HEK293 (cell line): ENCODE measurements at regions of chr1 and their contacts with region 1.

Region 1: GRCh38 chr1:162035241-162035640 is 11.6 kb upstream of the OLFML2B start:
- H3K4me3 ChIP-seq: no peak overlapping the region
- H3K27ac ChIP-seq: no peak overlapping the region
- H3K4me1 ChIP-seq: no peaks in the 10 kb centered on the region
- CTCF ChIP-seq: no peak

Region 2: DNA sequence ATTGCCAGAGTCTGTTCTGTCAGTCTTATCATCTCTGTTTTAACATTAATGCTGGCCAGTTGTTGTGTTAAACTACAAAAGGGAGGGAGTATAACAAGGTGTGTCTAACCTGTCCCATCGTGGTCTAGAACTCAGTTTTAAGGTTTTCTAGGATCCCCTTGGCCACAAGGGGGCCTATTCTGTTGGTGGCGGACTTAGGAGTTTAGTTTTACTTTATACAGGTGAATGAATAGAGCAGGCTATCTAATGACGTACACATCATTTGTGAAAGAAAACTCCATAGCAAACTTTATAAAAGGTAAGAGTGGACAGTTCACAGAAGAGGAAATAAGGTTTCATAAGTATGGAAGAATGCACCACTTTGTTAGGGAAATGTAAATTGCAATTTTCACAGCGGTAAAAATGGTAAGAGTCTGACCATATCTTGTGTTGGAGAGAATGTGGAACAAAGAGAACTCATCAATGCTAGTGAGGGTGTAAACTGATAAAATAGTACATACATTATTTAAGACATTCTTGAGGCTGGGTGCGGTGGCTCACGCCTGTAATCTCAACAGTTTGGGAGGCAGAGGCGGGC is 271.6 kb before region 1 on chr1:
- CTCF ChIA-PET with region 1: interaction called, 14 read pairs
- POLR2A ChIA-PET with region 1: no interaction called
- H3K4me3 ChIP-seq: no peak overlapping the region
- H3K27ac ChIP-seq: no peak overlapping the region
- H3K4me1 ChIP-seq: no peaks in the 10 kb centered on the region
- CTCF ChIP-seq: no peak

Region 3: DNA sequence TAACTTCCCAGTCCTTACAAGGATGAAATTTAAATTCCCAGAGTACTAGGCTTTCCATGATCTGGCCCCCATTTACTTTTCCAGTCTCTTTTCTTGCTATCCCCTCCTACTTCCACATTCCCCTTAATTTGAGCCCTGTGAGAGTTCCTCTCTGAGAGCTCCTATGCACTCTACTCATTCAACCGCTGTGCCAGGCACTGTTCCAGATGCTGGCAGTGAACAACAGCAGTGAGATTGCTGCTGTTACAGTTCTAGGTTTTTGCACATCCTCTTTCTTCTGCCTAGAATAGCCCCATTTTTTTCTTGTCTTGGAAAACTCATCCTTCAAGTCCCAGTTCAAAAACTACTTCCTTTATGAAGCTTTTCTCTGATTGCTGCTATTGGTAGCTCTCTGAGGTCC is 250.3 kb before region 1 on chr1:
- CTCF ChIA-PET with region 1: interaction called, 239 read pairs
- POLR2A ChIA-PET with region 1: no interaction called
- H3K4me3 ChIP-seq: no peak overlapping the region
- H3K27ac ChIP-seq: no peak overlapping the region
- H3K4me1 ChIP-seq: no peaks in the 10 kb centered on the region
- CTCF ChIP-seq: no peak

Region 4: GRCh38 chr1:161801955-161802354 is 233.3 kb before region 1 on chr1:
- CTCF ChIA-PET with region 1: interaction called, 239 read pairs
- POLR2A ChIA-PET with region 1: no interaction called
- H3K4me3 ChIP-seq: no peak overlapping the region
- H3K27ac ChIP-seq: no peak overlapping the region
- H3K4me1 ChIP-seq: no peaks in the 10 kb centered on the region
- CTCF ChIP-seq: no peak

Region 5: DNA sequence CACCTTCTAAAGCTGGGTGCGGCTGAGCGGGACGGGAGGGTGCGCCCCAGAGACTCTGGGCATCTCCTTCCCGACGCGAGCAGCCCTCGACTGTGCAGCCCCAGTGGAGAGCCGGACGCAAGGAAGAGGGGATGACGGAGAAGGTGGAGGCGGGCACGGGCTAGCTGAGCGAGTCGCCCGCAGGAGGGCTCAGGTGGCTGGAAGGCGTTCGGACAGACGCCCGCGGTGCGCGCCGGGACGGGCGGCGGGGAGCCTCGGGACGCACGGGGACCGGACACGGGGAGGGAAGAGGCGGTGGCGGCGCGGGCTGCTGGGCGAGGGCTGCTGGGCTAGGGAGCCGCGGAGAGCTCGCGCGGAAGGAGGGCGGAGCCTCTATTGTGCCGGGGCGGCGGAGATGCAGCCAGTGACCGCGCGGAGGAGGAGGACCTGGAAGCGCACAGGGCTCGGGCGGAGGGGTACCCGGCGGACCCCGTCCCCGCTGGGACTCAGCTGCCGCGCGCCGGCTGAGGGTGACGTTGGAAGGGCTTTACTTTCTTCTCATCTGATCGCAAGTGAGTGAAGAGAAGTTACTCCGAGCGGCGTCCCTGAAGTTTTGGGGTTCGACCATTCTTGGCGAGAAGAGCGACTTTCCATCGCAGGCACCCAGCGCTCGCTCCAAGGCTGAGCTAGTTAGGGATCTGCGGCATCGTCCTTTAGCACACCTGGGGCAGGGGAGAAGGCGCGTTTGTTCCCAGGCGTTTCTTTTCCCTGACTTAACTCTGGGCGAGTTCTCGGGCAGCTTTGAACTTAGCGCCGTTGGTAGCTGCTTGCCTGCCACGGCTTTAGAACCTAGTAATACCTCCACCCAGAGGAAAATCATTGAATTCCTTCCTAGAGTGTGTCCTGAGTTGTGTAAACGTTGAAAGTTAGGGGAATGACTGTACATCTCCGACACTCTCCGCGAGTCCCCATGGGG is 11.4 kb before region 1 on chr1 and contains the start of gene OLFML2B:
- CTCF ChIA-PET with region 1: interaction called, 30 read pairs
- POLR2A ChIA-PET with region 1: interaction called, 12 read pairs
- H3K4me3 ChIP-seq: peak within 1 kb of the TSS; percentile 43
- H3K27ac ChIP-seq: no peak within 1 kb of the TSS; the same call in 1 of the 2 replicates
- H3K4me1 ChIP-seq: peaks cover 12% of the 10 kb centered on the region
- CTCF ChIP-seq: no peak; the same call in 1 of the 2 replicates